Left lung (tissue), 14 donors: ENCODE measurements at regions of chr2 and their contacts with region 1.

Region 1: DNA sequence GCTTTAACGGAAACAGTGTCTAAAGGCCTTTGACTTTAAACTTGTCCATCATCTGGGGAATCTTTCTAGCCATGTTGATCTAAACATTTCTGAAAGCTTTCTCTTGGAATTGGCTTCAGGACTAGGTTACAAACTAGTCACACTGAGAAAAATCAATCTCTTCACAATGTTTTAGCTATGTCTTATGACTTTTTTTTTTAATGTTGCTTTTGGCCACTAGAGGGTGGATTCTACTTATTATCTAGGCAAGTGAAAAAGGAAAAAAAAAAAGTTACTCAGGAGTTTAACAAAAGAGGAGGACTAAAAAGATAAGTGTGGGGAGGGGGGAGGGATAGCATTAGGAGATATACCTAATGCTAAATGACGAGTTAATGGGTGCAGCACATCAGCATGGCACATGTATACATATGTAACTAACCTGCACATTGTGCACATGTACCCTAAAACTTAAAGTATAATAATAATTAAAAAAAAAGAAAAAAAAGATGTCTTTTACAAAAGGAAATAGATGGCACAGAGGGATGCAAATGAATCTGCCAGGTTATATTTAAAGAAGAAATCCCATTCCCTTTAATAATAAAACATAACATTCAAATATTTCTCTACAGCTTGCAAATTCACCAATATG is 160.4 kb upstream of the PID1 start:
- DNase-seq: peak in 1 of 4 donors; percentile 62
- ATAC-seq: peak; percentile 41
- H3K4me3 ChIP-seq: no peak overlapping the region
- H3K27ac ChIP-seq: no peak overlapping the region
- H3K4me1 ChIP-seq: no peaks in the 10 kb centered on the region
- H3K27me3 ChIP-seq: no peaks in the 10 kb centered on the region
- CTCF ChIP-seq: peak in 1 of 2 donors; percentile 19

Region 2: GRCh38 chr2:229572507-229573271 is 141.2 kb after region 1 on chr2:
- intact Hi-C with region 1: loop called in 1 of 2 experiments (anchors 10 kb)
- DNase-seq: no peak
- ATAC-seq: no peak
- H3K4me3 ChIP-seq: no peak overlapping the region
- H3K27ac ChIP-seq: no peak overlapping the region
- H3K4me1 ChIP-seq: no peaks in the 10 kb centered on the region
- H3K27me3 ChIP-seq: no peaks in the 10 kb centered on the region
- CTCF ChIP-seq: no peak